GM10248 (cell line): ENCODE measurements at regions of chr19 and their contacts with region 1.

Region 1: GRCh38 chr19:3075895-3076431 is 13.7 kb upstream of the TLE5 start:
- DNase-seq: peak; percentile 86
- CTCF ChIP-seq: peak; percentile 96

Region 2: DNA sequence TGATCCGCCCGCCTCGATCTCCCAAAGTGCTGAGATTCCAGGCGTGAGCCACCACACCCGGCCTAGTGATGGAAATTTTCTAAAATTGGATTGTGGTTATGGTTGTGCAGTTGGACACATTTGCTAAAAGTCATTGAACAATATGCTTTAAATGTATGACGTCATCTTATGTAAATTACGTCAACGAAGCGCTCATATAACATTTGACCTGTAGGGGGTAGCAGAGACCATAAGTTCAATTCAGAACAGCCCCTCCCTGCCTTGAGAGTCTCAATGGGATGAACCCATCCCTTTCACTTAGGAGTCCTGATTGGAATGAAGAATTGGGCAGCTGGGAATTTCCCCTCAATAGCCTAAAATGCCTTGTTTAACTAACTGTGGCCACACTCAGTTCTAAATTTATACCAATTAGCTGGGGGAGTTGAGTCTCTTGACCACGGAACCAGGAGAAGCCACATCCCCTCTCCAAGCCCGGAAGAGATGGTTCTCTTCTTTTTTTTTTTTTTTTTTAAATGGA is 113.9 kb before region 1 on chr19:
- CTCF ChIA-PET with region 1: interaction called, 10 read pairs
- POLR2A ChIA-PET with region 1: no interaction called
- DNase-seq: peak; percentile 72
- CTCF ChIP-seq: peak; percentile 60

Region 3: GRCh38 chr19:2986951-2987524 is 88.9 kb before region 1 on chr19:
- CTCF ChIA-PET with region 1: no interaction called
- POLR2A ChIA-PET with region 1: no interaction called
- DNase-seq: no peak
- CTCF ChIP-seq: no peak

Region 4: GRCh38 chr19:3035542-3036118 is 40.3 kb before region 1 on chr19:
- CTCF ChIA-PET with region 1: interaction called, 16 read pairs
- POLR2A ChIA-PET with region 1: no interaction called
- DNase-seq: peak; percentile 100
- CTCF ChIP-seq: no peak

Region 5: GRCh38 chr19:3055741-3056416 is 20.1 kb before region 1 on chr19:
- CTCF ChIA-PET with region 1: interaction called, 23 read pairs
- POLR2A ChIA-PET with region 1: no interaction called
- DNase-seq: no peak
- CTCF ChIP-seq: no peak

Region 6: DNA sequence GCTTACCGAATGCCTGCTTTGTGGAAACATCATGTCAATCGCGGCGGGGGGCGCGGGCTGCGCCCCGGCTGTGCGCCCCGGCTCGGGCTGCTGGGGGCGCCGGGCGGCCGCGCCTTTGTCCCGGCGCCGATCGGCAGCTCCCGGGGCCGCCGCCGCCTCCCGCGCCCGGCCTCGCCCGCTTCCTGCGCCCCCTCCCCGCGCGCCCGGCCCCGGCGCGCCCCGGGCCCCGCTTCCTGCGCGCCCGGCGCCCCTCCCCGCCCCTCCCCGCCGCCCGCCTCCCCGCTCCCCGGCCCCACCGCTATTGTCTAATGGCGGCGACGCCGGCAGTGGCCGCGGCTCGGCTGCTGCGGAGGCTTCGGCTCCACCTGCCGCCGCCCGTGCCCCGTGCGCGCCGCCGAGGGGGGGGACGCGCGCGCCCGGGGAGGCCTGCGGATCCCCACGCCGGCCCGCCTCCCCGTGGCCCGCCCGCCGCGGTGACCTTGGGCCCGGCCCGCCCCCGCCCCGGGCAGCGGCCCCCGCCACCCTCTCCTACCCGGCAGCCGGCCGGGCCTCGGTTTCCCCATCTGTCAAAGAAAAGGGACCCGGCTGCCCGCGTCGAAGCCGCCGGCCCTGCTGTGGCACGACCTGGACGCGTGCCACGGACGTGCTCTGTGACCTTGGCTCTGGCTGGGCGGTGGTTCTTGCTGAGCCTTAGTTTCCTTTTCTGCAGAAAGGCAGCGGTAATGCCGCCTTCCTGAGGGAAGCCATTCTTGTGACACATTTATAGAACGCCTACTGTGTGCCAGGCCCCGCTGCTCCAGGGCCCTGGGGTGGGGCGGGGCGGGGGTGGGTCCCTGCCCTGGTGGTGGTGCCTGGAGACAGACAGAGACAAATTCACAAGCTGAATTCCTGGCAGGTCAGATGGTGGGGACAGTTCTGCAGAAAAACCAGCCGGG is 13.5 kb before region 1 on chr19 and contains the start of gene TLE5:
- CTCF ChIA-PET with region 1: interaction called, 23 read pairs
- POLR2A ChIA-PET with region 1: no interaction called
- DNase-seq: peak; percentile 86
- CTCF ChIP-seq: no peak

Region 7: GRCh38 chr19:3102228-3103140 is 26.5 kb after region 1 on chr19:
- CTCF ChIA-PET with region 1: interaction called, 30 read pairs
- POLR2A ChIA-PET with region 1: no interaction called
- DNase-seq: no peak
- CTCF ChIP-seq: no peak